Panc1 (cell line): ENCODE measurements at regions of chr12 and their contacts with region 1.

Region 1: DNA sequence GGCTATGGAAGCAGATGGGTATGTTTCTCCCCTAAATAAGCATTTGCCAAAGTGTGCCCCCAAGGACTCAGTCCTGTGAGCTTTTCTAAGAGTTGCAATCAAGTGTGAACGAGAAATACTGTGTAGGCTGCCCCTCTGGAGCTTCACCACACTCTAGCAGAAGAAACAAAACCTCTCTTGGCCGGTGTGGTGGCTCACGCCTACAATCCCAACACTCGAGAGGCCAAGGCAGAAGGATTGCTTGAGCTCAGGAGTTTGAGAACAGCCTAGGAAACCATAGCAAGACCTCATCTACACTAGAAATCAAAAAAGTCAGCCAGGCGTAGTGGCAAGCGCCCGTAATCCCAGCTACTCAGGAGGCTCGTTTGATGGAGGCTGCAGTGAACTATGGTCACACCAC is 9.8 kb downstream of the VPS37B start:
- DNase-seq: no peak
- ATAC-seq: peak; percentile 6
- H3K4me3 ChIP-seq: peak overlapping the region; percentile 30 to 40
- H3K27ac ChIP-seq: peak overlapping the region; percentile 100
- H3K4me1 ChIP-seq: peaks cover 86% of the 10 kb centered on the region
- H3K27me3 ChIP-seq: no peaks in the 10 kb centered on the region
- CTCF ChIP-seq: no peak

Region 2: DNA sequence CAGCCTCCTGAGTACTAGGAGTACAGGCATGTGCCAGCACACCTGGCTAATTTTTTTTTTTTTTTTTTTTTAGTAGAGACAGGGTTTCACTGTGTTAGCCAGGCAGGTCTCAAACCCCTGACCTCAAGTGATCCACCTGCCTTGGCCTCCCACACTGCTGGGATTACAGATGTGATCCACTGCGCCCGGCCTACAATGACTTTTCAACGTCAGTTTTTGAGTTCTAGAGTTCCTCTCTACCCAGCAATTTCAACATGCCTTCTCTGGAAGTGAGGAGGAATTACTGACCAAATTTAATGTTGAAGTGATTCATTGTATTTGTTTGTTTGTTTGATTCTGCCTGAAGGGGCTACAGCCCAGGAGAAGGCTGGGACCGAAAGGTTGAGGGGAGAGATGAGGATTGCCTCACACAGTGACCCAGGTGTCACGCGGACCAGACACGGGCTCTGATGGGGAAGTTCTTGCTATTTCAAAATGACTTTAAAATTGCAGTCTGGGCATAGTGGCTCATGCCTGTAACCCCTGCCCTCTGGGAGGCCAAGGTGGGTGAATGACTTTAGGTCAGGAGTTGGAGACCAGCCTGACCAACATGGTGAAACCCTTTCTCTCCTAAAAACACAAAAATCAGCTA is 142.2 kb before region 1 on chr12:
- CTCF ChIA-PET with region 1: no interaction called
- POLR2A ChIA-PET with region 1: no interaction called
- in situ Hi-C with region 1: no loop called
- intact Hi-C with region 1: no loop called
- DNase-seq: no peak
- ATAC-seq: no peak
- H3K4me3 ChIP-seq: no peak overlapping the region
- H3K27ac ChIP-seq: no peak overlapping the region
- H3K4me1 ChIP-seq: no peaks in the 10 kb centered on the region
- H3K27me3 ChIP-seq: no peaks in the 10 kb centered on the region
- CTCF ChIP-seq: no peak

Region 3: GRCh38 chr12:122928404-122929147 is 42.4 kb after region 1 on chr12:
- CTCF ChIA-PET with region 1: no interaction called
- POLR2A ChIA-PET with region 1: no interaction called
- in situ Hi-C with region 1: no loop called
- intact Hi-C with region 1: no loop called
- DNase-seq: no peak
- ATAC-seq: no peak
- H3K4me3 ChIP-seq: no peak overlapping the region
- H3K27ac ChIP-seq: no peak overlapping the region
- H3K4me1 ChIP-seq: no peaks in the 10 kb centered on the region
- H3K27me3 ChIP-seq: no peaks in the 10 kb centered on the region
- CTCF ChIP-seq: no peak

Region 4: DNA sequence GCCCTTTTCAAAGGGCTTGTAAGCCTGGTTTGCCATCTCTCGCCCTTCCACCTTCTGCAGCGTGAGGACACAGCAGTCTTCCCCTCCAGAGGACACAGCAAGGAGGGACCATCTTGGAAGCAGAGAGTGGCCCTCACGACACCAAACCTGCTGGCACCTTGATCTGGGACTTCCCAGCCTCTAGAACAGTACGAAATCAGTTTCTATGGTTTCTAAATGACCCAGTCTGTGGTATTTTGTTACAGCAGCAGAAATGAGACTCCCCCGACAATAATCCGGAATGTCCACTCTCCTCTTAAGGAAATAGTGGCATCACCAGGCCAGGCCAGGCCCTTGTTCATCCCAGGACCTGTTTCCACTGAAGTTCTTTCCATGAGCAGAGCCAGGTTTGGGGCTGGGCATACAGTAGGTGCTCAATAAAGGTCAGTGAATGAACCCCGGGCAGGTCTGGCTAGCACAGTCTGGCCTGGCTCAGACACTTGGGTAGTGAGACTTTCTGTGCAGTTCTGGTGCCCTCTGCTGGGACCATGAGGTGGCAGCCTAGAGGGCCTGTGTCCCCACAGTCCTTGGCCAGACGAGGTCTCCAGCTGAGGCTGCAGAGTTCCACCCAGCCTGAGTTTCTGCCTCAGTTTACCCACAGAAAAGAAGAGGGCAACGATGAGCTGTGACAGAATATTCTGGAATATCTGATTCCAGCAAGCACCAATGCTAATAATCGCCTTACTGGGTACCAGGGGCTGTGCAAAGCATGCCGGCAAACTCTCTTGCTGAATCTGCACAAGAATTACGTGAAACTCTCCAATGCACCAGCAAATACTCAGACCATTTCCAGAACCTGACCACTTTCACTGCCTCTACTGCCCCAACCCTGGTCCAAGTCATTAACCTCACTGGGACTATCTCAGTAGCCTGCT is 66.1 kb after region 1 on chr12:
- CTCF ChIA-PET with region 1: interaction called, 11 read pairs
- POLR2A ChIA-PET with region 1: interaction called, 3 read pairs
- in situ Hi-C with region 1: no loop called
- intact Hi-C with region 1: no loop called
- DNase-seq: no peak
- ATAC-seq: peak; percentile 97
- H3K4me3 ChIP-seq: no peak overlapping the region
- H3K27ac ChIP-seq: peak overlapping the region; percentile 82
- H3K4me1 ChIP-seq: peaks cover 27% of the 10 kb centered on the region
- H3K27me3 ChIP-seq: no peaks in the 10 kb centered on the region
- CTCF ChIP-seq: peak; percentile 95

Region 5: DNA sequence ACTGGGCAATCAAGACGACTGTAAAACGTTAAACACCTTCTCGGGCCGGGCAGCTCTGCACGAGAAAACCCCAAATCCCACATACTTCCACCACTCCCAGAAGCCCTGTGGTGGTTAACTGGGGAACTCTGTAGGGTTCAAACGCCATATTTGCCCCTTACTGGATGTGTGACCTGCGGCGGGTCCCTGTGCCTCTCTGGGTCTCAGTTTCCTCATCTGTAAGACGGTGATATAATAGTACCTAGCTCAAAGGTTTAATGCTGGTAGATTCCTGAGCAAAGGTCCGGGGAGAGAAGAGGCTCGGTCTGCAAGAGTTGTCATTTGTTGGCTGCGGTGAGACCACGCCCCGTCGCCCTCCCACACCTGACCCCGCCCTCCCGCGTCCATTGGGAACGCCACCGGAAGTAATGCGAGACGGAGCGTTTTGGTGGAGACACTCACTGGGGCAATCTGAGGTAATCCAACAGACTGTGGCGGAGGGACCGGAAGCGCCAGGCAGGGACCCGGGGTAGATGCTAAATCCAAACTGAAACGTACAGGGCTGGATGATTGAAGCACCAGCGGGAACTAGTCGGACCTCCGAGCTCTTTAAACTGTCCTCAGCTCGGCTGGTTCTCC is 88.2 kb after region 1 on chr12:
- CTCF ChIA-PET with region 1: no interaction called
- POLR2A ChIA-PET with region 1: no interaction called
- in situ Hi-C with region 1: no loop called
- intact Hi-C with region 1: no loop called
- DNase-seq: peak; percentile 92
- ATAC-seq: peak; percentile 92
- H3K4me3 ChIP-seq: peak overlapping the region; percentile 95 to 98
- H3K27ac ChIP-seq: peak overlapping the region; percentile 98
- H3K4me1 ChIP-seq: peaks cover 15% of the 10 kb centered on the region
- H3K27me3 ChIP-seq: no peaks in the 10 kb centered on the region
- CTCF ChIP-seq: no peak